CD4-positive, alpha-beta memory T cell (primary cell): ENCODE measurements at regions of chr16 and their contacts with region 1.

Region 1: DNA sequence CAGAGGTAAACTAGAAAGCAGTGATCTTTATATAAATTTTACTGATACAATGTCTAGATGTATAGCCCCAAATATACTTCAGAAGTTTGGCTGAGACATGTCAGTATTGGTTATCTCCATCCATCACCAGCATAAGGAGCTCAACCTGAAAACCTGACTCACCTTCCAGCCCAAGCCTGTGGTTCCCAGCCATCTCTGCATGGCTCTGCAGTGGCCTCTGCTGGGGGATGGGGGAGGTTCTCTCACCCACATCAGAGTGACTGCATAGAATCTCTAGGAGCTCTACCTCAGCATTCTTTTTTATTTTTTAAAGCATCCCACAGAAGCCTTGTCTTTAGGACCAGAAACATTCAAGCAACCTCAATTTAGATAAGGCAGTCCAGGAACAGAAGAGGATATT is 27.3 kb downstream of the USP7 start:
- DNase-seq: peak; percentile 58 to 82 (median 66)
- H3K4me3 ChIP-seq: no peak overlapping the region
- H3K4me3 Mint-ChIP-seq: peak overlapping the region in 4 of 8 donors; percentile 39 to 62 (median 48)
- H3K27ac ChIP-seq: no peak overlapping the region
- H3K27ac Mint-ChIP-seq: peak overlapping the region; percentile 2 to 49 (median 26)
- H3K4me1 ChIP-seq: peaks cover 76% of the 10 kb centered on the region
- H3K4me1 Mint-ChIP-seq: peaks cover 70 to 89% (median 79%) of the 10 kb centered on the region in 4 donors
- H3K27me3 ChIP-seq: no peaks in the 10 kb centered on the region
- H3K27me3 Mint-ChIP-seq: no peaks in the 10 kb centered on the region

Region 2: GRCh38 chr16:8712589-8713361 is 223.6 kb before region 1 on chr16:
- CTCF ChIA-PET with region 1: no interaction called
- POLR2A ChIA-PET with region 1: no interaction called
- intact Hi-C with region 1: no loop called
- DNase-seq: no peak
- H3K4me3 ChIP-seq: no peak overlapping the region
- H3K4me3 Mint-ChIP-seq: no peak overlapping the region
- H3K27ac ChIP-seq: no peak overlapping the region
- H3K27ac Mint-ChIP-seq: peak overlapping the region in 1 of 7 donors; percentile 51
- H3K4me1 ChIP-seq: no peaks in the 10 kb centered on the region
- H3K4me1 Mint-ChIP-seq: peaks cover 0 to 5% (median 4%) of the 10 kb centered on the region in 4 donors
- H3K27me3 ChIP-seq: no peaks in the 10 kb centered on the region
- H3K27me3 Mint-ChIP-seq: no peaks in the 10 kb centered on the region

Region 3: DNA sequence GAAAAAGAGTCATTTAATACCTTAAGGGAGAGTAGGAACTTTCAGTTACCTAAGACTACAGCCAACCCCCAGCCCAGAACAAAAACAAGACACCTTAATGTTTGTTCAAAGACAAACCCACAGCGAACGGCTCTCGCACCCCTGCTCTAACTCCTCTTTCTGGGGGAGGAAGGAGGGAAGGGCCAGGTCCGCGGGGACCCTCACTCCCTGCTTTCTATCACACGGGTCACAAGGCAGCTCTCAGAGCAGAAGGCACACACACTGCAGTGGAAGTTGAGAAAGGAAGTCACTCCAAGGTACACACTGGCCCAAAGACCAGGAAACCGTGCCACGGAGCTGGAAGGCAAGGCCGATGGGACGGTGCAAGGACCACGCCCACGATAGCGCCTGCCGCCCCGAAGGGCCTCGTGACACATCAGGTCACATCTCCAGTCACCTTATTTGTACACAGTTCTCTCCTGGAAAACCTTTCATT is 44.3 kb before region 1 on chr16:
- CTCF ChIA-PET with region 1: interaction called, 3 read pairs
- POLR2A ChIA-PET with region 1: no interaction called
- intact Hi-C with region 1: loop called (anchors 5 kb)
- DNase-seq: no peak
- H3K4me3 ChIP-seq: no peak overlapping the region
- H3K4me3 Mint-ChIP-seq: peak overlapping the region; percentile 23 to 61 (median 44)
- H3K27ac ChIP-seq: peak overlapping the region; percentile 43
- H3K27ac Mint-ChIP-seq: peak overlapping the region; percentile 79 to 98 (median 94)
- H3K4me1 ChIP-seq: peaks cover 14% of the 10 kb centered on the region
- H3K4me1 Mint-ChIP-seq: peaks cover 9 to 24% (median 14%) of the 10 kb centered on the region in 4 donors
- H3K27me3 ChIP-seq: no peaks in the 10 kb centered on the region
- H3K27me3 Mint-ChIP-seq: no peaks in the 10 kb centered on the region

Region 4: GRCh38 chr16:8946544-8946943 is 10.1 kb after region 1 on chr16:
- CTCF ChIA-PET with region 1: interaction called, 28 read pairs
- POLR2A ChIA-PET with region 1: interaction called, 11 read pairs
- intact Hi-C with region 1: no loop called
- DNase-seq: no peak
- H3K4me3 ChIP-seq: no peak overlapping the region
- H3K4me3 Mint-ChIP-seq: peak overlapping the region in 6 of 8 donors; percentile 11 to 83 (median 40)
- H3K27ac ChIP-seq: no peak overlapping the region
- H3K27ac Mint-ChIP-seq: peak overlapping the region in 2 of 7 donors; percentile 51 to 59
- H3K4me1 ChIP-seq: peaks cover 100% of the 10 kb centered on the region
- H3K4me1 Mint-ChIP-seq: peaks cover 81 to 98% (median 89%) of the 10 kb centered on the region in 4 donors
- H3K27me3 ChIP-seq: no peaks in the 10 kb centered on the region
- H3K27me3 Mint-ChIP-seq: no peaks in the 10 kb centered on the region

Region 5: GRCh38 chr16:8951447-8952280 is 15.2 kb after region 1 on chr16:
- CTCF ChIA-PET with region 1: interaction called, 28 read pairs
- POLR2A ChIA-PET with region 1: interaction called, 11 read pairs
- intact Hi-C with region 1: no loop called
- DNase-seq: no peak
- H3K4me3 ChIP-seq: no peak overlapping the region
- H3K4me3 Mint-ChIP-seq: peak overlapping the region; percentile 48 to 76 (median 64)
- H3K27ac ChIP-seq: no peak overlapping the region
- H3K27ac Mint-ChIP-seq: peak overlapping the region in 5 of 7 donors; percentile 17 to 75 (median 57)
- H3K4me1 ChIP-seq: peaks cover 95% of the 10 kb centered on the region
- H3K4me1 Mint-ChIP-seq: peaks cover 65 to 92% (median 81%) of the 10 kb centered on the region in 4 donors
- H3K27me3 ChIP-seq: no peaks in the 10 kb centered on the region
- H3K27me3 Mint-ChIP-seq: no peaks in the 10 kb centered on the region

Region 6: GRCh38 chr16:8958344-8959167 is 22.1 kb after region 1 on chr16:
- CTCF ChIA-PET with region 1: interaction called, 25 read pairs
- POLR2A ChIA-PET with region 1: interaction called, 9 read pairs
- intact Hi-C with region 1: loop called (anchors 1 kb)
- DNase-seq: peak in 2 of 5 donors; percentile 32 to 59
- H3K4me3 ChIP-seq: peak overlapping the region; percentile 12 to 21
- H3K4me3 Mint-ChIP-seq: peak overlapping the region; percentile 71 to 98 (median 88)
- H3K27ac ChIP-seq: peak overlapping the region; percentile 53
- H3K27ac Mint-ChIP-seq: peak overlapping the region; percentile 72 to 97 (median 87)
- H3K4me1 ChIP-seq: peaks cover 83% of the 10 kb centered on the region
- H3K4me1 Mint-ChIP-seq: peaks cover 63 to 86% (median 74%) of the 10 kb centered on the region in 4 donors
- H3K27me3 ChIP-seq: no peaks in the 10 kb centered on the region
- H3K27me3 Mint-ChIP-seq: no peaks in the 10 kb centered on the region

Region 7: DNA sequence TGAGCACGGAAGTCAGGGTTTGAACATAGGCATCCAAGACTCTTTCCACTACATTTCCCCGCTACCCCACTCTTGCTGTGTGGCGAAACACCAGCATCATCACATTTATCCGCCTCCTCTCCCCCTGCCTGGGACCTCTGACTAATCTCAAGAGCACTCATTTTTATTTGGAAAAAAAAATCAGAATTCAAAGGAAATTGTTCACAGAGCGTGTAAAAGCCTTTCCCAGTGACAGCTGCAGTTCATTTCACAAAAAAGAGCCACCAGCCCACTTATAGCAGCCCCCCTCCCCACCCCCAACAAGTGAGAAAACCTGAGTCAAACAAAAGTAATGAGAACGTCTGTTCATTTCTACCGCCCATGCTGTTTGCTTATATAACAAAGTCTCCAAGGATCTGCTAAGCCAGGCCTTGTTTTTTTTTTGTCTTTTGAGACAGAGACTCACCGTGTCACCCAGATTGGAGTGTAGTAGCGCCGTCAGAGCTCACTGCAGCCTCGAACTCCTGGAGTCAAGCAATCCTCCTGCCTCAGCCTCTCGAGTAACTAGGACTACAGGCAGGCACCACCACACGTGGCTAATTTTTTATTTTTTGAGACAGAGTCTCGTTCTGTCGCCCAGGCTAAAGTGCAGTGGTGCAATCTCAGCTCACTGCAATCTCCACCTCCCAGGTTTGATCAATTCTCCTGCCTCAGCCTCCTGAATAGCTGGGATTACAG is 106.7 kb after region 1 on chr16:
- CTCF ChIA-PET with region 1: no interaction called
- POLR2A ChIA-PET with region 1: no interaction called
- intact Hi-C with region 1: no loop called
- DNase-seq: no peak
- H3K4me3 ChIP-seq: no peak overlapping the region
- H3K4me3 Mint-ChIP-seq: no peak overlapping the region
- H3K27ac ChIP-seq: no peak overlapping the region
- H3K27ac Mint-ChIP-seq: no peak overlapping the region
- H3K4me1 ChIP-seq: no peaks in the 10 kb centered on the region
- H3K4me1 Mint-ChIP-seq: peaks cover 0 to 8% (median 0%) of the 10 kb centered on the region in 4 donors
- H3K27me3 ChIP-seq: no peaks in the 10 kb centered on the region
- H3K27me3 Mint-ChIP-seq: peaks cover 1% of the 10 kb centered on the region in 2 donors

Region 8: GRCh38 chr16:9134739-9135138 is 198.3 kb after region 1 on chr16:
- CTCF ChIA-PET with region 1: interaction called, 6 read pairs
- POLR2A ChIA-PET with region 1: no interaction called
- intact Hi-C with region 1: loop called (anchors 10 kb)
- DNase-seq: peak in 4 of 5 donors; percentile 38 to 46 (median 46)
- H3K4me3 ChIP-seq: no peak overlapping the region
- H3K4me3 Mint-ChIP-seq: peak overlapping the region in 1 of 8 donors; percentile 62
- H3K27ac ChIP-seq: no peak overlapping the region
- H3K27ac Mint-ChIP-seq: peak overlapping the region in 4 of 7 donors; percentile 39 to 82 (median 55)
- H3K4me1 ChIP-seq: peaks cover 18% of the 10 kb centered on the region
- H3K4me1 Mint-ChIP-seq: peaks cover 9 to 26% (median 19%) of the 10 kb centered on the region in 4 donors
- H3K27me3 ChIP-seq: no peaks in the 10 kb centered on the region
- H3K27me3 Mint-ChIP-seq: peaks cover 0 to 2% of the 10 kb centered on the region in 2 donors